OCI-LY7 (cell line): ENCODE measurements at regions of chr17 and their contacts with region 1.

Region 1: DNA sequence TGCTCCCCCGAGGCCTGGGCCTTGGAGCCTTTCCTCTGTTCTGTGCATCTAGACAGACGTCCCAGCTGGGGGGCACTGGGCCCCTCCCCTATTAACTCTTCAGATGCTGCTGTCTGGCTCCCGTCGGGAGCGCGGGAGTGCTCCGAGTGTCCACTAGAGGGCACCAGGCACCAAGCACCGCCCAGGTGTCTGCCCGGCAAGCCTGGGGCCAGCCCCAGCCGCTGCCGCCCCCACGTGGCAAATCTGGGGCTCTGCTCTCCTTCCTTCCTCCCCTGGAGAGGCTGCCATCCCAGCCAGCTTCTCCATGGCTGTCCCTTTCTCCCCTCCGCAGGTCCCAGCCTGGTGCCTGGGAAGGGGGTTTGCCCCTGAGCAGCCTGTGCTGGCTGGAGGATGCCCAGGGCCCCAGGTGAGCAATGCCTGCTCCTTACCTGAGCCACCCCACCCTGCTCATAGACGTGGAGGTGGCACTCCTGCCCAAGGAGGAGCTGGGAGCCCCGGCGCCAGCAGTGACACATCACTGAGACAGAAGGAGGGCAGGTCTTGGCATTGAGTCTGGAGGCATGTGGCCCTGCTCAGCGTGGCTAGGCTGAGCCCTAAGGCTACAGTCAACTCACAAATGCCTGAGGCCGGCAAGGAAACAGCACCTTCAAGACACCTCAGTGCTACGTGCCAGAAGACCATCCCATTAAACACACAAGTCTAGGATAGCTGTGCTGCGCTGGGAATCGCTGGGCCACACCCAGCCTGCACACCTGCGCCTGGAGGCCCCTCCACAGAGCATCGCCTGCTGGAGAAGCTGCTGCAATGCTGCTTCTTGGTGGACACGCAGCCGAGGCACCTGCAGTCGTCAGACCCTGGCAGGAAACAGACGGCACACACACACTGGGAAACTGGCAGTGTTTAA is 19.7 kb downstream of the TMEM235 start:
- DNase-seq: peak; percentile 93
- H3K4me3 ChIP-seq: peak overlapping the region; percentile 30
- H3K27ac ChIP-seq: peak overlapping the region; percentile 61
- H3K4me1 ChIP-seq: peaks cover 40% of the 10 kb centered on the region
- CTCF ChIP-seq: peak; percentile 100

Region 2: GRCh38 chr17:78082988-78083387 is 168.2 kb before region 1 on chr17:
- CTCF ChIA-PET with region 1: no interaction called
- POLR2A ChIA-PET with region 1: no interaction called
- intact Hi-C with region 1: loop called (anchors 1 kb)
- DNase-seq: no peak
- H3K4me3 ChIP-seq: no peak overlapping the region
- H3K27ac ChIP-seq: no peak overlapping the region
- H3K4me1 ChIP-seq: no peaks in the 10 kb centered on the region
- CTCF ChIP-seq: no peak

Region 3: GRCh38 chr17:78133971-78134898 is 116.9 kb before region 1 on chr17:
- CTCF ChIA-PET with region 1: no interaction called
- POLR2A ChIA-PET with region 1: no interaction called
- intact Hi-C with region 1: loop called (anchors 5 kb)
- DNase-seq: peak; percentile 91
- H3K4me3 ChIP-seq: peak overlapping the region; percentile 81
- H3K27ac ChIP-seq: peak overlapping the region; percentile 91
- H3K4me1 ChIP-seq: peaks cover 54% of the 10 kb centered on the region
- CTCF ChIP-seq: peak; percentile 97

Region 4: GRCh38 chr17:78186692-78187595 is 64.2 kb before region 1 on chr17 and contains the starts of genes AFMID and TK1:
- CTCF ChIA-PET with region 1: no interaction called
- POLR2A ChIA-PET with region 1: interaction called, 3 read pairs
- intact Hi-C with region 1: loop called (anchors 1 kb)
- DNase-seq: peak; percentile 98
- H3K4me3 ChIP-seq: peak within 1 kb of the TSS; percentile 76
- H3K27ac ChIP-seq: peak within 1 kb of the TSS; percentile 41
- H3K4me1 ChIP-seq: peaks cover 60% of the 10 kb centered on the region
- CTCF ChIP-seq: peak; percentile 67
- total RNA-seq, gene AFMID: 87.8 and 89.1 TPM in 2 replicates
- total RNA-seq, gene TK1: 108 and 118 TPM in 2 replicates

Region 5: DNA sequence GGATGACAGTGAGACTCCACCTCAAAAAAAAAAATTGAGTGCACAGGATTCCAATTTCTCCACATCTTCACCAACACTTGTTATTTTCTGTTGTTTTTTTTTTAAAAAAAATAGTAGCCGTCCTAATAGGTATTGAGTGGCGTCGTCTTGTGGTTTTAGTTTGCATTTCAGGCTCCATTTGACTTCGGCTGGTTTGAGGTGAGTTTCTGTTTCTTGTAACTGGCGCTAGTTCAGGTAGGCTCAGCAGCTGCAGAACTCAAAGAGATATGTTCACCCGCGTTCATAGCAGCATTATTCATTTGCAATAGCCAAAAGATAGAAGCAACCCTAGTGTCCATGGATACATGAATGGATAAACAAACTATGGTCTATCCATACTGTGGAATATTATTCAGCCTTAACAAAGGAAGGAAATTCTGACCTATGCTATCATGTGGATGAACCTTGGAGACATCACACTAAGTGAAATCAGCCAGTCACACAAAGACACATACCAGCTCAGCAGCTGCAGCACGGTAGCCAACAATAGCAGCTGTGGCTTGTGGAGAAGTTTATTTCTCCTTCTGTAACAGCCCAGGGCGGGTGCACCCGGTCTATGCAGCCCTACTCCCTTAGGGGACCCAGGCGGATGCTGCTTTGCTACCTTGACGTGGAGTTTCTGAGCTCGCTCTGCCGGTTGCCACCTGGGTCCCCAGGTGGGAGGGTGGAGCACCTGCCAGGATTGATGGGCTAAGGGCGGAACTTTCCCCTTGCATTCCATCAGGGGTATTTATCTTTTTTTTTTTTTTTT is 25.1 kb after region 1 on chr17:
- CTCF ChIA-PET with region 1: interaction called, 6 read pairs
- POLR2A ChIA-PET with region 1: interaction called, 3 read pairs
- intact Hi-C with region 1: loop called (anchors 1 kb)
- DNase-seq: peak; percentile 93
- H3K4me3 ChIP-seq: peak overlapping the region; percentile 1
- H3K27ac ChIP-seq: peak overlapping the region; percentile 75
- H3K4me1 ChIP-seq: peaks cover 64% of the 10 kb centered on the region
- CTCF ChIP-seq: 0 out of 2 replicates have a peak, but pooled peaks have one; percentile 36

Region 6: DNA sequence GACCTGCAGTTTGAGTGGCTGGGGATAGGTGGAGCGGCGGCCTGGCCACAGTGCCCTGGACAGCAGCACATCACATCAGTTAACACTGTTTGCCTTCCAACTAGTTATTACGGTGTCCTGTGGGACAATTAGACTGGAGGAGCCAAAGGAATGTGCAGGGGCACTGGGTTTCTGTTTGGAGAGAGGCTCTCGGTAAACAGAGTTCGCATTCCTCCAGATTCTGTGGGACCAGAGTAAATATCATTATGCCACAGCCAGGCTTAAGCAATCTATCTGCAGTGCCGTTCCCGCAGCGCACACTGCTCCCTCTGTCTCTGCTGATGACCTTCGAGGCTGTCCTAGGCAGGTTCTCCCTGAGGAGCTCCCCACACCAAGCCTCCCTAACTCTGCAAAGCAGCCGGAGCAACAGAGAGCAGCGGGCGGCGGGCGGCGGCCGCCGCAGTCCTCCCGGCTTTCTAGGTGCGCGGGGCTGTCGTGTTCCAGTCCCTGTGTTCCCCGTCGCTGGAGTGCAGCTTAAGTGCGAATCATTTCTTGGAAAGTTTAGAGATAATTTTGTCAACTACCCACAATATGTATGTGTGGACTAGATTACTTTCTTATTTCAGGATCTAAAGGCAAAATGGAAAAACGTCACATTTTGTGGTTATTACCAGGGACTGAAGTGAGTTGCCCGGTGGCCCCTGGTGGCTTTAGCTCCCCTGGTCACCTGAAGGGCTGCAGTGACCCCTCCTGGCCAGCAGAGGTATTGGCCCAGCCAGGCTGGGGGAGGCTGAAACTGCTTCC is 170.5 kb after region 1 on chr17:
- CTCF ChIA-PET with region 1: no interaction called
- POLR2A ChIA-PET with region 1: no interaction called
- intact Hi-C with region 1: loop called (anchors 2 kb)
- DNase-seq: peak; percentile 76
- H3K4me3 ChIP-seq: no peak overlapping the region
- H3K27ac ChIP-seq: no peak overlapping the region
- H3K4me1 ChIP-seq: no peaks in the 10 kb centered on the region
- CTCF ChIP-seq: peak; percentile 99